Psoas muscle (tissue), 8 donors: ENCODE measurements at regions of chr11 and their contacts with region 1.

Region 1: DNA sequence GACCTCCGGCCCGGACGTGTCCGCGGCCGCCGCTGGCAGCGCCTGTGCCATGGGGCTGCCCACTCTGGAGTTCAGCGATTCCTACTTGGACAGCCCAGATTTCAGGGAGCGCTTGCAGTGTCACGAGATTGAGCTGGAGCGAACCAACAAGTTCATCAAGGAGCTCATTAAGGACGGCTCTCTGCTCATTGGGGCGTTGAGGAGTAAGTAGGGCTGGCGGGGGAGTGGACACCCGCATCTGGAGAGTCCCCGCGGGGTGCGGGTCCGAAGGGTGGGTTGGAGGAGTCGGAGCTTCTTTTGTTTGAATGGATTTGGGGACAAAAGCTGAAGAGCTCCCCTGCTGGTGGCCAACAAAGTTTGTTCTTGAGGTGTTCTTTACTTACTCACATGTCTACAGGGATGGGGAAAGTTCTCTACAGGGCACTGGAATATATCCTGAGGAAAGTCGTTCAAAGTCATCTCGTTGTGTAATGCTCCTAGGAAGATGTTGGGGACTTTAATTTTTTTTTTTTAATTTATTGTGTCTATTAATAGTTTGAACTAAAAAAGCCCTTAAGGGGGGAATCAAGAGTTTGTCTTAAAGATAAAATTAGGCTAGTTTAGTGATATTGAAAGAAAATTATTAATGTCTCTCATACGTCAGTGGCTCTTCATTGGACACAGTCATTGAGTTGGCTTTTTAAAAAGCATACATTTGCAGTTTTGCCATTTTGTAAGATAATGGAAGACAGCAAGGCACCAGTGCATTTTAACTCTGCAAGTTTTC is 725 bp downstream of the ARHGAP42 start:
- DNase-seq: peak; percentile 56 to 57
- ATAC-seq: peak; percentile 72 to 85 (median 82)
- H3K4me3 ChIP-seq: peak overlapping the region; percentile 74
- H3K27ac ChIP-seq: peak overlapping the region; percentile 86
- H3K4me1 ChIP-seq: no peaks in the 10 kb centered on the region
- H3K27me3 ChIP-seq: no peaks in the 10 kb centered on the region
- CTCF ChIP-seq: peak; percentile 56

Region 2: GRCh38 chr11:100562128-100562527 is 125.7 kb before region 1 on chr11:
- intact Hi-C with region 1: no loop called
- DNase-seq: no peak
- ATAC-seq: no peak
- H3K4me3 ChIP-seq: no peak overlapping the region
- H3K27ac ChIP-seq: no peak overlapping the region
- H3K4me1 ChIP-seq: peaks cover 16% of the 10 kb centered on the region
- H3K27me3 ChIP-seq: no peaks in the 10 kb centered on the region
- CTCF ChIP-seq: no peak

Region 3: GRCh38 chr11:100841711-100842407 is 154.0 kb after region 1 on chr11:
- intact Hi-C with region 1: no loop called
- DNase-seq: no peak
- ATAC-seq: peak in 2 of 4 donors; percentile 46 to 56
- H3K4me3 ChIP-seq: peak overlapping the region; percentile 32
- H3K27ac ChIP-seq: peak overlapping the region; percentile 44
- H3K4me1 ChIP-seq: peaks cover 3% of the 10 kb centered on the region
- H3K27me3 ChIP-seq: no peaks in the 10 kb centered on the region
- CTCF ChIP-seq: no peak

Region 4: DNA sequence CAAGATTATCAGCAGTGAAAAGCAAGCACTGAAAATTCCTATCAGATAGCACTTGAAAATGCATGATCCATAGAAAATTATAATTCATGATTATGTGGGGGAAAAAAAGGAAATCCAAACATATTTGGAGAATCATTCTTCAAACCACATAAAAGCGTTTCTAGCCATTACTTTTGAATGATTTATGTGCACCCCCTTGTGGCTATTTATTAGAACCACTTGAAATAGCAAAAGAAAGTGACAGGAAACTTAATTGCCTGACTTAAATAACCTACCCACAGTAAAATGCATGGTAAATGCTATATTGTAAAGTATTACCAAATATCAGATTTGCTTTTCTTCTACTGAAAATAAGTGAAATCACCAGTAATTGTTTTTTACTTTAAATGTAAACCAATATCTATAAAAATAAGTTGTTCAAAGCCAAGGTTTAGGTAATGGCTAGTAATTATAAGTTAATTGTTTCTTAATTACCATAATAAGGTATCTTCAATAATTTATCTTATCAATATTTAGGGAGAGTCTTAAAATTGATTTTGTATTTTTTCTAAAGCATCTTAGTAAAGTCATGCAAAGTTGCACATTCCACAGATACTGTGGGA is 167.8 kb after region 1 on chr11:
- intact Hi-C with region 1: loop called (anchors 2 to 5 kb)
- DNase-seq: no peak
- ATAC-seq: peak in 1 of 4 donors; percentile 57
- H3K4me3 ChIP-seq: no peak overlapping the region
- H3K27ac ChIP-seq: no peak overlapping the region
- H3K4me1 ChIP-seq: no peaks in the 10 kb centered on the region
- H3K27me3 ChIP-seq: no peaks in the 10 kb centered on the region
- CTCF ChIP-seq: peak; percentile 64